GM23248 (cell line): ENCODE measurements at regions of chr22 and their contacts with region 1.

Region 1: DNA sequence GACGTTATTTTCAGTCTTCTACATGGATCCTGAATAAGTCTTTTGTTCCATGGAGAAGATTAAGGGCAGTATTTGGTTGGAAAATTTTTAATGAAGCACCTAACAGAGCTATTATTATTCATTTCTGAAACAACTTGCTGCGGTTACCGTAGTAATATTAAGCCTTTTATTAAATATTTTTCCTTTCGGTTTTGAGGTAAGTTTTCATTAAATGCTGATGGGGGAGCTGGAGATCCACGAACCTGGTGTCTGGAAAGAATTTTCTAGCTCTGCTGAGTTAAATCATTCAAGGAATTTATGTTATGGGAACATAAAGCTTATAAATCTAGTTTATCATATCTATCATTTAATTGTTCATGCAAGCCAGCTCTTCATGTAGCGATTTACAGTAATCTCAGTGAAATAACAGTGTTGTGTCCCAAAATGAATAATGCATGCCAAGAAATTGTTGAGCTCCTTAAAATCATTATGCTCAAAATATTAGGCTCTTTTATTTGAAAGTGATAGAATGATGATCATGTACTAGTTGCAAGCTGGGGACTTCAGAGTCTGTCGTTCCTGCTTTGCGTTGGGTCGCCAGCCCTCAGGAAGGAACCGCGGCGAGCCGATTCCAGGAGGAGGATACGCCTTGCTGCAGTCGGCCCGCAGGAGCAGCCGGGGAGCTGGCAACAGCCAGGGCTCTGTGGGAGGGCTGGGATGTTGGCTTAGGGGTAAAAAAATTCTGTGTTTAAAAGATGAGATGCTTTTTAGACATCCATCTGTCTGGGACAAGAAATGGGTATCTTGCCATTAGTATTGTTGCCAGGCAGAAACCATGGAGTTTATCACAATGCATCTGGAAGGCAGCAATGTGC is 83.1 kb downstream of the TBC1D22A start:
- DNase-seq: peak; percentile 72
- H3K4me3 ChIP-seq: peak overlapping the region; percentile 65
- H3K27ac ChIP-seq: peak overlapping the region; percentile 13
- H3K4me1 ChIP-seq: peaks cover 32% of the 10 kb centered on the region
- H3K27me3 ChIP-seq: no peaks in the 10 kb centered on the region

Region 2: GRCh38 chr22:45799291-45799690 is 1046.2 kb before region 1 on chr22:
- in situ Hi-C with region 1: no loop called
- DNase-seq: no peak
- H3K4me3 ChIP-seq: no peak overlapping the region
- H3K27ac ChIP-seq: no peak overlapping the region
- H3K4me1 ChIP-seq: peaks cover 2% of the 10 kb centered on the region
- H3K27me3 ChIP-seq: no peaks in the 10 kb centered on the region

Region 3: DNA sequence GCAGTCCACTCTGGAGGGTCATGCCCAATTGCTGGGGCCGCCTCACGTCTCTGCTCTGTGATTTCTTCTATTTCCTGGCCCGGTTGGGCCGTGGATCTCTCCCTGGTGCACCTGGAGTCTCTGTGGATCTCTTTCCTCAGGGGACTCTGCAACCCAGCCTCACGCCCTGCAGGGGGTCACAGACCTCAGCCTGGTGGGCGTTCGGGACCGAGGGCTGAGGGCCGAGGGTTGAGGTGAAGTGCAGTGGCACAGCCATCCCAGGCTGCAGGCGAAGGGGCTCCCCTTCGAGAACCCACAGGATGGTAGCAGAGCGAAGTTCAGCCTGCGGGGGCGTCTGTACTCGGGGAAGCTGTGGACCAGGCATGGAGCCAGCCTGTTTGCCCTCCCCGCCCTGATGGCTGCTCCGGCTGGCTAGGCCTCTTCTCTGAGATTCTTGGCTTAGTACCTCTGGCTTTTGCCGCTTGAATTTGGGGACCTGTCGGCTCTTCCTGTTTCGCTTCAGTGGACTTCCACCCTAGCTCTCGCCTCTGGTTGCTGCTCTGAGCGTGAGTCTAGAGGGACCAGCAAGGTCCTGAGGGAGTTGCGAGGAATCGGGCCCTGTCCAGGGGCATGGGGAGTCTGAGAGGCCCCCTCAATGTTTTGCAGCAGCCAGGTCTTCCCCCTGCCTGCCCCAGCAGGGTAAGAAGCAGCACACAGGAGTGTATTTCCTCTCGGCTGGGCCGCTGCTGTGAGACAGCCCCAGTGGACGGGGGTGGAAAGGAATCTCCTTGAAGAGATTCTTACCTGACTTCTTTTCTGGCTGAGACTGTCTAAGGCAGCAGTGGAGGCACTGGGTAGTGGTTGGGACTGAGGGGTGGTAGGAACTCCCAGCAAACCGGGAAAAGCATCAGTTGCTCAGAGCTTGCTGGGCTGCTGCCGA is 57.7 kb after region 1 on chr22:
- in situ Hi-C with region 1: no loop called
- DNase-seq: no peak
- H3K4me3 ChIP-seq: no peak overlapping the region
- H3K27ac ChIP-seq: no peak overlapping the region
- H3K4me1 ChIP-seq: no peaks in the 10 kb centered on the region
- H3K27me3 ChIP-seq: no peaks in the 10 kb centered on the region

Region 4: DNA sequence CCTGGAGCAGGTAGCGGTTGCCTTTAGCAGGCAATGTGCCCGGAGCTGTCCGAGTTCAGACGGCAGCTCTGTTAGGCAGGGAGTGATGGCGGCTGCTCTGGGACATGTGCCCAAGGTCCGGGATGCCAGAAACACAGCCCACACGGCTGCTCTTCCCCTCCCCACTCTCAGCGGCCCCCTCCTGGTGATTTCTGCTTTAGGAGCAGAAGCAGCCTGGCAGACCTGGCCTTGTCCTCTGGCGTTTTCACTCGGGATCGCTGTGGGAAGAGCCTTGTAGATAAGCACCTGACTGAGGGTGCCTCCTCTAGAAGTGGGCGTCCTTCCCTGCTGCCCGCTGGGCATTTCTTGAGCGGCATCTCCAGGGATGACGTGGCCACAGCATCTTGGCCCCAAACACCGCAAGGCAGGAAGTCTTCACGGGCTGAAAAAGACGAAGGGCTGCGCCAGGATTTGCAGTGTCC is 309.1 kb after region 1 on chr22:
- in situ Hi-C with region 1: no loop called
- DNase-seq: peak; percentile 93
- H3K4me3 ChIP-seq: peak overlapping the region; percentile 66
- H3K27ac ChIP-seq: peak overlapping the region; percentile 17
- H3K4me1 ChIP-seq: peaks cover 10% of the 10 kb centered on the region
- H3K27me3 ChIP-seq: no peaks in the 10 kb centered on the region

Region 5: DNA sequence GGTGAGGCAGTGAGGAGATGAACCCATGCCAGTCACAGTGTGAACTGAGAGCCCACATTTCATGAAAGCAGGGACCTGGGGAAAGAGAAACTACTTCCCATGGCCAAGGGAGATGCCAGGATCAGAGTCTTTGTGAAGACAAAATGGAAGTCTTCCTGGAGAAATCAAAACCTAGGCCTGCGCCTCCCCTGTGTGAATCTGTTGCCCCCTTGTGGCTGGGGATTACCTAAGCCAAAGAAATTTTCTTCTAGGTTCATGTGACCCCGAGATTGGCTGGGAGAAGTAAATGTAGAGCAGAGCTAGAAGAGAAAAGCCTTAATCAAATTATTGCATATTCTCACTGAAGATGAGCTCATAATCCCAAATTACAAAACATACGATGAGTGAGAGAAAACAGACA is 992.2 kb after region 1 on chr22:
- in situ Hi-C with region 1: loop called (anchors 25 kb)
- DNase-seq: peak; percentile 49
- H3K4me3 ChIP-seq: no peak overlapping the region
- H3K27ac ChIP-seq: no peak overlapping the region
- H3K4me1 ChIP-seq: 0 out of 2 replicates have a peak, but pooled peaks cover 4% of the 10 kb centered on the region
- H3K27me3 ChIP-seq: no peaks in the 10 kb centered on the region

Region 6: GRCh38 chr22:48492366-48493320 is 1647.1 kb after region 1 on chr22:
- in situ Hi-C with region 1: loop called (anchors 25 kb)
- DNase-seq: peak; percentile 87
- H3K4me3 ChIP-seq: no peak overlapping the region
- H3K27ac ChIP-seq: no peak overlapping the region
- H3K4me1 ChIP-seq: no peaks in the 10 kb centered on the region
- H3K27me3 ChIP-seq: peaks cover 24% of the 10 kb centered on the region; the same call in 1 of the 2 replicates